Lower leg skin (tissue), 4 donors: ENCODE measurements at regions of chr6 and their contacts with region 1.

Region 1: DNA sequence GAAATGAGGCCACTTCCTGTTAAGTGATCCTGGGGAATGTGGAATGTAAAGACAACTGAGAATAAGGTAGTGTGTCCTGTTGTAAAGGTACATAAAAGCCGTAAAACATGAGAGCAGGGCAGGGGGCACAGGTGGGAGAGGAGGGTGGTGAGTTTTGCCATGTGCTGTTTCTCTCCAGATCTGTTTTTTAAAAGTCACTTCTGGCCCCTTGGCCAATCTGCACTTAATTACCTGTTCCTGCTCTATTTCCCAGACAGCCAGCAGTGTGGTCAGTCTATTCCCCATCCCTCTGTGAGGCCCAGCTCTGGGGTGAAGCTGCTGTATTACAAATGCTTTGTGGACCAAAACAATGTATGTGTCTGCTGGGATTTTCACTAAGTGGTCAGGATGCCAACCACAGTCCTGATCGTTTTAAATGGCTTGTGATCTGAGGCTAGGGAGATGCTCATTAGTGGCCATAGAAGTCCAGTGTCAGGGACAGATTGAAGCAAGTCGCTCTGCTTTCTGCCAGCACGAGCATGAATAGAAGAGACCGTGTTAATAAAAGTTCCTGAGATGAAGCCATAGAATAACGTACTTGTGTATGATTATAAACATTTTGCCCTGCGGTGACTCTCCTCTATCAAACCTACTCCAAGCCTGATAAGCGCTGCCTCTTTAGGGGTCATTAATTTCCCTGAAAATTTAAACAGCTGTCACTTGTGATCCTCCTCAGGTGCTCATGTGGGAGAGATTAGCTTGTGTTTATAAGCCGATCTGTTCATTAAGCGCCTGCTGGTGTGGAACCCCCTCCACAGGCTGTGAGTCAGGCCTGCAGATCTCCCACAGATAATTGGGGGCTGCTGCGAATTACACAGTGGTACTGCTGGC is 111.8 kb upstream of the CENPW start:
- DNase-seq: no peak
- H3K4me3 ChIP-seq: no peak overlapping the region
- CTCF ChIP-seq: no peak
- POLR2A ChIP-seq: no peak

Region 2: GRCh38 chr6:127561660-127562059 is 1333.6 kb after region 1 on chr6:
- intact Hi-C with region 1: loop called (anchors 10 kb)
- DNase-seq: no peak
- H3K4me3 ChIP-seq: no peak overlapping the region
- CTCF ChIP-seq: no peak
- POLR2A ChIP-seq: no peak